Posterior vena cava (tissue), 2 donors: ENCODE measurements at regions of chr11 and their contacts with region 1.

Region 1: GRCh38 chr11:44229098-44229497 is 80.8 kb downstream of the ALX4 start:
- DNase-seq: no peak

Region 2: DNA sequence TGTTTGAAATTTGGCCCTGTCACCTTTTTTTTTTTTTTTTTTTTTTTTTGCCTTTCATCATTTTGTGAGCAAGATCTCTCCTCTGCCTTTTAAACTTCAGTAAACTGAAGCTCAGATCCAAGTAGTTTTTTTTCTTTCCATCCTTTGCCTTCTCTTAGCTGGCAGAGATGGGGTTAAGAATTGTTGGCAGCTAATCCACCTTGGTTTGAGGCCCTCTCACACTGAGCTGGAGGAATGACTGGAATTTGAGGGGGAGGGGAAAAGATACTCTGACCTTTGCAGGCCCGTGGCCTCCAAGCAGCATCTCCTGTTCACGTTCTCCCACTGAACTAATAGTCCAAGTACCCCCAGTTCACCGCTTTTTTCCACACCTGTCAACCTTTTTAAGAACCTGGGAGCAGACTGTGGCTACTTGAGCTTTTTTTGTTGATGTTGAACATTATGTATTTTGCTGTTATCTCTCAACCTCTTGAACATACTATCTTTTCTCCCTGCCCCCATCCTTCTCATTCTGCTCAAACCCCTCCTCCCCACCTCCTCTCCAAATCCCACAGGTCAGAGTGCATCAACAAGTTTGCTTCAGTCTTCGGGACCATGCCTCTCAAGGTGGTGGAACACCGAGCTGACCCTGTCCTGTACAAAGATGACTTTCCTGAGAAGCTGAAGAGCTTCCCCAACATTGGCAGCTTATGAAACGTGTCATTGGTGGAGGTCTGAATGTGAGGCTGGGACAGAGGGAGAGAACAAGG is 14.7 kb after region 1 on chr11:
- intact Hi-C with region 1: loop called in 1 of 2 experiments (anchors 1 kb)
- DNase-seq: no peak

Region 3: GRCh38 chr11:44709966-44710365 is 480.9 kb after region 1 on chr11:
- intact Hi-C with region 1: loop called in 1 of 2 experiments (anchors 5 kb)
- DNase-seq: no peak